Activated CD8-positive, alpha-beta T cell treated with anti-CD3 and anti-CD28 coated beads, Interleukin-2, amount 10 ng/mL, durations not matched to agents 7 days and 5 days (primary cell): ENCODE measurements at regions of chr9 and their contacts with region 1.

Region 1: GRCh38 chr9:137095664-137096517 is 9.1 kb downstream of the MAN1B1 start:
- DNase-seq: peak; percentile 94
- ATAC-seq: peak; percentile 99
- H3K4me3 Mint-ChIP-seq: peak overlapping the region; percentile 76
- H3K27ac Mint-ChIP-seq: peak overlapping the region; percentile 97
- H3K4me1 Mint-ChIP-seq: peaks cover 23% of the 10 kb centered on the region
- H3K27me3 Mint-ChIP-seq: no peaks in the 10 kb centered on the region

Region 2: DNA sequence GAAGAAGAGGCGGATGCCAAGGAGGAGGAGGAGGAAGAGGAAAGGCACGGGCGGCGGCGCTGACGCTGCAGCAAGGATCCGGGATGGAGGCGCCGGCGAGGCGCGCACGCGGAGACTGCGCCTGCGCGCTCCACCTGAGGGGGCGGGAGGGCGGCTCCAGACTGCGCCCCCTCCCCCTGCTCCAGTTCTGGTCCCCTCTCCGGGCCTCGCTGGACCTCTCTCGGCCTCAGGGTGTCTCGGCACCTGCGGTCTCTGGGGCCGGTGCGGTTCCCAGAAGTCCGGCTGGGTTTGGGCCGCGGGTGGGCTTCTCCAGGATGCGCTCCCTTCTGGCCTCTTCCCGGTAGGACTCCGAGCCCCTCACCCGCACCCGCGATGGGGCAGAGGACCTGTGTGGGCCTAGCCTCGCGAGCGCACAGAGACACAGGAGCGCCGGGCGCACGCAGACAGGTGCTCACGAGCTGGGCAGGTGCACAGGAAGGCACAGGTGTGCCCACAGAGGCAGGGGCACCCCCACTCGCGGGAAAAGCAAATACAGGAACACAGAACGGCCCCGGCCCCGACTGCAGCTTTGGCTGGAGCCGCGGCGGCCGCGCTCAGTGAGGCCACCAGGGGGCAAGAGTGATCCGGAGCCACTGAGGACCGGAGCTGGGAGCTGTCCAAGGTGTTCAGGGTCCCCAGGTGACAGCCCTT is 49.6 kb before region 1 on chr9 and contains the start of gene NPDC1:
- CTCF ChIA-PET with region 1: interaction called, 14 read pairs
- POLR2A ChIA-PET with region 1: no interaction called
- DNase-seq: peak; percentile 89
- ATAC-seq: peak; percentile 82
- H3K4me3 Mint-ChIP-seq: peak within 1 kb of the TSS; percentile 71
- H3K27ac Mint-ChIP-seq: no peak within 1 kb of the TSS
- H3K4me1 Mint-ChIP-seq: peaks cover 15% of the 10 kb centered on the region
- H3K27me3 Mint-ChIP-seq: peaks cover 28% of the 10 kb centered on the region
- total RNA-seq, gene NPDC1: 20.1 to 29.9 TPM

Region 3: GRCh38 chr9:137070201-137070905 is 25.5 kb before region 1 on chr9 and contains the start of gene SAPCD2:
- CTCF ChIA-PET with region 1: interaction called, 38 read pairs
- POLR2A ChIA-PET with region 1: interaction called, 6 read pairs
- DNase-seq: peak; percentile 92
- ATAC-seq: peak; percentile 90
- H3K4me3 Mint-ChIP-seq: peak within 1 kb of the TSS; percentile 86
- H3K27ac Mint-ChIP-seq: peak within 1 kb of the TSS; percentile 91
- H3K4me1 Mint-ChIP-seq: peaks cover 28% of the 10 kb centered on the region
- H3K27me3 Mint-ChIP-seq: no peaks in the 10 kb centered on the region
- total RNA-seq, gene SAPCD2: 56.8 to 57.0 TPM

Region 4: DNA sequence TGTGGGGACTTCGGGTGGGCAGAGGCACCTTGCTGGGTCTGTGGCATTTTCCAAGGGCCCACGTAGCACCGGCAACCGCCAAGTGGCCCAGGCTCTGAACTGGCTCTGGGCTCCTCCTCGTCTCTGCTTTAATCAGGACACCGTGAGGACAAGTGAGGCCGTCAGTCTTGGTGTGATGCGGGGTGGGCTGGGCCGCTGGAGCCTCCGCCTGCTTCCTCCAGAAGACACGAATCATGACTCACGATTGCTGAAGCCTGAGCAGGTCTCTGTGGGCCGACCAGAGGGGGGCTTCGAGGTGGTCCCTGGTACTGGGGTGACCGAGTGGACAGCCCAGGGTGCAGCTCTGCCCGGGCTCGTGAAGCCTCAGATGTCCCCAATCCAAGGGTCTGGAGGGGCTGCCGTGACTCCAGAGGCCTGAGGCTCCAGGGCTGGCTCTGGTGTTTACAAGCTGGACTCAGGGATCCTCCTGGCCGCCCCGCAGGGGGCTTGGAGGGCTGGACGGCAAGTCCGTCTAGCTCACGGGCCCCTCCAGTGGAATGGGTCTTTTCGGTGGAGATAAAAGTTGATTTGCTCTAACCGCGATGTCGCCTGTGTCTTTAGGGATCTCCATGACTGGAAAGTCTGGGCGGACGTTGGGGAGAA is 12.8 kb after region 1 on chr9:
- CTCF ChIA-PET with region 1: interaction called, 18 read pairs
- POLR2A ChIA-PET with region 1: interaction called, 10 read pairs
- DNase-seq: no peak
- ATAC-seq: no peak
- H3K4me3 Mint-ChIP-seq: no peak overlapping the region
- H3K27ac Mint-ChIP-seq: no peak overlapping the region
- H3K4me1 Mint-ChIP-seq: peaks cover 8% of the 10 kb centered on the region
- H3K27me3 Mint-ChIP-seq: no peaks in the 10 kb centered on the region

Region 5: GRCh38 chr9:137114610-137115391 is 18.9 kb after region 1 on chr9 and contains the start of gene DPP7:
- CTCF ChIA-PET with region 1: interaction called, 18 read pairs
- POLR2A ChIA-PET with region 1: interaction called, 8 read pairs
- DNase-seq: peak; percentile 85
- ATAC-seq: peak; percentile 96
- H3K4me3 Mint-ChIP-seq: peak within 1 kb of the TSS; percentile 74
- H3K27ac Mint-ChIP-seq: peak within 1 kb of the TSS; percentile 73
- H3K4me1 Mint-ChIP-seq: peaks cover 11% of the 10 kb centered on the region
- H3K27me3 Mint-ChIP-seq: no peaks in the 10 kb centered on the region
- total RNA-seq, gene DPP7: 248 TPM

Region 6: GRCh38 chr9:137129456-137130175 is 33.7 kb after region 1 on chr9:
- CTCF ChIA-PET with region 1: interaction called, 19 read pairs
- POLR2A ChIA-PET with region 1: interaction called, 9 read pairs
- DNase-seq: peak; percentile 93
- ATAC-seq: peak; percentile 95
- H3K4me3 Mint-ChIP-seq: peak overlapping the region; percentile 83
- H3K27ac Mint-ChIP-seq: peak overlapping the region; percentile 82
- H3K4me1 Mint-ChIP-seq: peaks cover 31% of the 10 kb centered on the region
- H3K27me3 Mint-ChIP-seq: peaks cover 7% of the 10 kb centered on the region

Region 7: DNA sequence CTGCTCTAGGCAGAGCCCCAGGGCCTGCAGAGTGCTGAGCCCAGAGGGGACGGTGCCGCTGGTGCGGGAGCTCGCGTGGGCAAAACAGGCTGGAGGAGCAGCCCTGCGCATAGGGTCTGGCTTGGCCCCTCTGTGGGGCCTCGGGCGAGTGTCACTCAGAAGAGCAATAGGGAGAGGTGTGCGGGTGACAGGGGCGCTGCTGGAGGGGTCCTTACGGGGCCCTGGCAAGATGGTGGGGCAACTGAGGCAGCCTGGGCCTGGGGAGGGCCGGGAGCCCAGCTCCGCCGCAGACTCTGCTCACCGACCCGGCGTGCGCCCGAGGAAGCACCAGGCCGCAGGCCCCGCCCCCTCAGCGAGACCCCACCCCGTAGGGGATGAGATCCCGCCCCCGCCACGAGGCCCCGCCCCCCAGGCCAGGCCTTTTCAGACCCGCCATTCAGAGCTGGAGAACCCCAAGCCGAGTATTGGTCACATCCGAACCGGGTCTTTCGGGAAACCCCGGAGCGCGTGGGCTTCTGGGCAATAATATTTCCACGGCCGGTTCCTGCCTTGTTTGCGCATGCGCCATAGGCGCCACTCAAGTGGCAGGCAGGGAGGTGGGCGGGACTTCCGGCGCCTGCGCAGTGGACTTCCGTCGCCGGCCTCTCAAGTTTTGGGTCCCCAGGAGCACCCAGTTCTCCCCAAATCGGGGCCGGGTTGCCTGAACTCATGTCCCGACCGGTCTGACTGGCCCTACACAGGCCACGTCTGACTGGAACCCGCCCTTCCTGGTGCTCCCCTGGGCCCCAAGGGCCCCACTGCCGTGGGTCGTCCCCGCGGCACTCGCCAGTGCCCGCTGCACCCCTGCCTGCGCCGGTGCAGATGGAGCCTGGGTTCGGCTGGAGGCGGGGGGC is 127.4 kb after region 1 on chr9:
- CTCF ChIA-PET with region 1: interaction called, 13 read pairs
- POLR2A ChIA-PET with region 1: no interaction called
- DNase-seq: peak; percentile 98
- ATAC-seq: peak; percentile 90
- H3K4me3 Mint-ChIP-seq: peak overlapping the region; percentile 80
- H3K27ac Mint-ChIP-seq: peak overlapping the region; percentile 87
- H3K4me1 Mint-ChIP-seq: peaks cover 19% of the 10 kb centered on the region
- H3K27me3 Mint-ChIP-seq: no peaks in the 10 kb centered on the region

Region 8: DNA sequence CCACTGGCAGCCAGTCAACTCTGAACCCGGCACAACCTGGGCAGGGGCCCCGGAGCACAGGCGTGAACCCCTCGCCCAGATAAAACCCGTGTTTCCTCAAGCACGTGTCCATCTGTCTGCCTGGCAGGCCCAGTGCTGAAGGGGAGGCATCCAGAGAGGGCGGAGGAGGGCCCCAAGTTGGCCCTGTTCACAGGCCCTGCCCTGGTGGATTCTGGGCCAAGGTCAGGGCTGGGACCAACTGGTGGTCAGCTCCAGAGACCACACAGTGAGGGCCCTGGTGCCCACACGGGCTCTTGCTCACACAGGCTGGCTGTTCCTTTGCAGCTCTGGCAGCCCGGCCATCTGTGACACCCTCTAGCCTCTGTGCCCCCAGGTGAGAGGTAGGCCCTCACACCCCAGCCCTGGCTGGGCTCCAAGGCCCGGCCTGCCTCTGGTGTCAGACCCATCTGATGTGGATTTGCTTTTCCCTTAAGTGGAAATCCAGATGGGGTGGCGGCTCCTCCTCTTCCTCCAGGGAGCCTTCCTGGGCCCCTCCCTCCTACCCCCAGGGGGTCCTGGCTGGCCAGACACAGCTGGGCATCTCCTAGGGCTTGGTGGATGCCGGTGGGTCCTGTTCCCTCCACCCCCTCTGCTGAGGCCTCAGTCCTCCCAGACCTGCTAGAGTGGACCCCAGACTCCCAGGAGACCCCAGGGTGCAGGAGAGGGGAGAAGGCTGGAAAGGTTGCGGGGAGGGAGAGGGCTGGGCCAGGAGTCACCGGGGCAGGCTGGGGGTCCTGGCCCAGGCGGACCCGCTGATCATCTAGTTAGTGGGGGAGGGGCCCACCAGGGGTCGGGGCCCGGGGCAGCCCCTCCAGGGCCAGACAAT is 154.7 kb after region 1 on chr9:
- CTCF ChIA-PET with region 1: no interaction called
- POLR2A ChIA-PET with region 1: no interaction called
- DNase-seq: no peak
- ATAC-seq: no peak
- H3K4me3 Mint-ChIP-seq: no peak overlapping the region
- H3K27ac Mint-ChIP-seq: no peak overlapping the region
- H3K4me1 Mint-ChIP-seq: peaks cover 6% of the 10 kb centered on the region
- H3K27me3 Mint-ChIP-seq: no peaks in the 10 kb centered on the region